Natural killer cell (primary cell): ENCODE measurements at regions of chr10 and their contacts with region 1.

Region 1: GRCh38 chr10:133438711-133439273 is 14.4 kb upstream of the SPRN start:
- DNase-seq: peak; percentile 14 to 54
- ATAC-seq: peak in 1 of 3 donors; percentile 42
- H3K4me3 ChIP-seq: no peak overlapping the region
- H3K4me3 Mint-ChIP-seq: no peak overlapping the region
- H3K27ac ChIP-seq: no peak overlapping the region
- H3K27ac Mint-ChIP-seq: no peak overlapping the region
- H3K4me1 ChIP-seq: peaks cover 42% of the 10 kb centered on the region
- H3K4me1 Mint-ChIP-seq: peaks cover 23 to 41% of the 10 kb centered on the region in 2 donors
- H3K27me3 ChIP-seq: no peaks in the 10 kb centered on the region
- H3K27me3 Mint-ChIP-seq: no peaks in the 10 kb centered on the region
- CTCF ChIP-seq: peak; percentile 27

Region 2: DNA sequence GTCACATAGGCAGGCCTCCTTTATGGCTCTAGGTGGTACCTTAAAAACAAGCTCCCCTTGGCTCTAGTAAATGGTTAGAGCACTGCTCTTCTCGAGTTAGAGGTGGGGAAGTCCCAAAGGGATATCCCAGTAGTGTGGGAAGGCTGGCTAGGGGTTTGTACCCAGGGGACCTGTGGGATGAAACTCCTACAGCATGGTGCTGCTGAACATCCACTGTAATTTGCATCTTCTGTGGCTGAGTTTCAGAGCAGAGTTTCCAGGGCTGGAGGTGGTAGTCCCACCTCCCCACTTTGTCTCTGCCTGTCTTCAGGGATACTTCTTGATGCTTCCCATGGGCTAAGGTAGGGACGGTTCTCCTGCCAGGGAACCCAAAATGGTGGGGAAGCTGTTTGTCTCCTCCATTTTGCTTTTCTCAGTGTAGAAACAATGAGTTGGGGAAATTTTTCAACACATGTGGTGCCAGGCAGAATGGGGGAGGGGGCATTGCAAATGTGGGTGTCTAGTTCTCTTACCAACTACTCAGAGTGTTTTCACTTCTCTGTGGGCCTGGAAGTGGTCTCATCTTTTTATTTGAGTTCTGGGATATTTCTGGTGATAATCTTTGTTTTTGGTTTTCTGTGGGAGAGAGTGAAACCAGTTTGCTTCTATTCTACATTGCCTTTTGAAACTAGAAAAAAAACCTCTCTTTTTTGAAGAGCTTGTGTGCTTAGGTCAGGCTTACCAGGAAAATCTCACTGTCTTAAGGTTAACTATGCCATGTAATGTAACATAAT is 51.2 kb after region 1 on chr10:
- intact Hi-C with region 1: loop called (anchors 10 kb)
- DNase-seq: no peak
- ATAC-seq: no peak
- H3K4me3 ChIP-seq: no peak overlapping the region
- H3K4me3 Mint-ChIP-seq: no peak overlapping the region
- H3K27ac ChIP-seq: no peak overlapping the region
- H3K27ac Mint-ChIP-seq: no peak overlapping the region
- H3K4me1 ChIP-seq: no peaks in the 10 kb centered on the region
- H3K4me1 Mint-ChIP-seq: no peaks in the 10 kb centered on the region
- H3K27me3 ChIP-seq: no peaks in the 10 kb centered on the region
- H3K27me3 Mint-ChIP-seq: peaks cover 4 to 17% of the 10 kb centered on the region in 2 donors
- CTCF ChIP-seq: no peak

Region 3: GRCh38 chr10:133520155-133520738 is 81.5 kb after region 1 on chr10:
- intact Hi-C with region 1: loop called (anchors 1 kb)
- DNase-seq: peak; percentile 89 to 90
- ATAC-seq: peak; percentile 96 to 99 (median 98)
- H3K4me3 ChIP-seq: peak overlapping the region; percentile 31
- H3K4me3 Mint-ChIP-seq: peak overlapping the region; percentile 58
- H3K27ac ChIP-seq: peak overlapping the region; percentile 25
- H3K27ac Mint-ChIP-seq: peak overlapping the region; percentile 29 to 36
- H3K4me1 ChIP-seq: peaks cover 12% of the 10 kb centered on the region
- H3K4me1 Mint-ChIP-seq: peaks cover 11 to 14% of the 10 kb centered on the region in 2 donors
- H3K27me3 ChIP-seq: no peaks in the 10 kb centered on the region
- H3K27me3 Mint-ChIP-seq: peaks cover 12 to 27% of the 10 kb centered on the region in 2 donors
- CTCF ChIP-seq: peak; percentile 98